ENCODE measurements at regions of chr16 and their contacts with region 1.

Region 1: DNA sequence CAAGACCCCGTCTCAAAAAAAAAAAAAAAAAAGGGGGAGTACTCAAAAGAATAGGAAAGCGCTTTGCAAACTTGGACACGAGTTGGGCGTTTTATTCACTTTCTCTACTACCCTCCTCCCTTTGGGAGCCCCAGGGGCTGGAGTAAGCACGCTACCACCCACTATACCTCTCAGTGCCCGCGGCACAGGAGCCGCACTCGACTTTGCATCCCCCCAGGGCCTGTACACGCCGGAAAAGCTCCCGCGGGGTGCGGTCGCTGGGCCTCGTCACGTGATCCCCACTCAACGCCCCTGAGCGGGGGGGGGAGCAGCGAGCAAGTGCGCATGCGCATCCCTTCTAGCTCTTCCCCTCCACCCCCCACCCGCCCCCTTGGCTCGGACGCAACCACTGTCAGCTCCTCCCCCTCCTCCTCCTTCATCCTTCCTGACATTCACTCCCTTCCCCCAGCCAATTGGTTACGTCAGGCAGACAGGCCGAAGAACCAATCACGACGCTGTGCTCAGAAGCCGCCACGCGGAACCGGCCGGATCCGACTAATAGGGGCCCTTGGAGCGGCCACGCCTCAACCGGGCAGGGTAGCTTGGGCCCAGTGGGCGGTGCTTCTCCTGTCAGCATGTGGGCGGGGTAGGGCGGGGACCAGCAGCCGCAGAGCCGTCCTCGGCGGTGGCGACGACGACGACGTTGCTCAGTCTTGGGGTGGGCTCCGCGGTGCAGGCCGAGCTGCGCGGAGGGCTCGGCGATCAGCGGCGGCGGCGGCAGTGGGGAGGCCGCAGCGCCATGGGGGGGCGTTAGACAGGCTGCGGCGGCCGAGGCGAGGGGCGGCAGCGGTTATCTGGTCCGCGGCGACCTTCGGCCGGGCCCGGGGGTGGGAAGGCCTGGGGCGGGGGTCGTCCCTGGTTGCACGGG is at the start of gene HAPSTR1:
- DNase-seq: peak; percentile 99
- ATAC-seq: peak; percentile 93
- H3K4me3 ChIP-seq: peak within 1 kb of the TSS; percentile 81
- H3K27ac ChIP-seq: peak within 1 kb of the TSS; percentile 90
- H3K4me1 ChIP-seq: peaks cover 6% of the 10 kb centered on the region
- H3K27me3 ChIP-seq: no peaks in the 10 kb centered on the region
- CTCF ChIP-seq: no peak
- EP300 ChIP-seq: no peak; a peak in 1 of 4 replicates
- POLR2A ChIP-seq: peak; percentile 98
- RAD21 ChIP-seq: no peak
- polyA plus RNA-seq, gene HAPSTR1: 8.7 to 12.5 TPM

Region 2: GRCh38 chr16:8694795-8695728 is 396.2 kb before region 1 on chr16:
- CTCF ChIA-PET with region 1: no interaction called
- POLR2A ChIA-PET with region 1: no interaction called
- RAD21 ChIA-PET with region 1: no interaction called
- SMC1A ChIA-PET with region 1: no interaction called
- in situ Hi-C with region 1: no loop called
- intact Hi-C with region 1: no loop called
- DNase-seq: no peak
- ATAC-seq: no peak
- H3K4me3 ChIP-seq: no peak overlapping the region
- H3K27ac ChIP-seq: no peak overlapping the region
- H3K4me1 ChIP-seq: no peaks in the 10 kb centered on the region
- H3K27me3 ChIP-seq: no peaks in the 10 kb centered on the region
- CTCF ChIP-seq: no peak
- EP300 ChIP-seq: no peak
- POLR2A ChIP-seq: no peak
- RAD21 ChIP-seq: no peak

Region 3: DNA sequence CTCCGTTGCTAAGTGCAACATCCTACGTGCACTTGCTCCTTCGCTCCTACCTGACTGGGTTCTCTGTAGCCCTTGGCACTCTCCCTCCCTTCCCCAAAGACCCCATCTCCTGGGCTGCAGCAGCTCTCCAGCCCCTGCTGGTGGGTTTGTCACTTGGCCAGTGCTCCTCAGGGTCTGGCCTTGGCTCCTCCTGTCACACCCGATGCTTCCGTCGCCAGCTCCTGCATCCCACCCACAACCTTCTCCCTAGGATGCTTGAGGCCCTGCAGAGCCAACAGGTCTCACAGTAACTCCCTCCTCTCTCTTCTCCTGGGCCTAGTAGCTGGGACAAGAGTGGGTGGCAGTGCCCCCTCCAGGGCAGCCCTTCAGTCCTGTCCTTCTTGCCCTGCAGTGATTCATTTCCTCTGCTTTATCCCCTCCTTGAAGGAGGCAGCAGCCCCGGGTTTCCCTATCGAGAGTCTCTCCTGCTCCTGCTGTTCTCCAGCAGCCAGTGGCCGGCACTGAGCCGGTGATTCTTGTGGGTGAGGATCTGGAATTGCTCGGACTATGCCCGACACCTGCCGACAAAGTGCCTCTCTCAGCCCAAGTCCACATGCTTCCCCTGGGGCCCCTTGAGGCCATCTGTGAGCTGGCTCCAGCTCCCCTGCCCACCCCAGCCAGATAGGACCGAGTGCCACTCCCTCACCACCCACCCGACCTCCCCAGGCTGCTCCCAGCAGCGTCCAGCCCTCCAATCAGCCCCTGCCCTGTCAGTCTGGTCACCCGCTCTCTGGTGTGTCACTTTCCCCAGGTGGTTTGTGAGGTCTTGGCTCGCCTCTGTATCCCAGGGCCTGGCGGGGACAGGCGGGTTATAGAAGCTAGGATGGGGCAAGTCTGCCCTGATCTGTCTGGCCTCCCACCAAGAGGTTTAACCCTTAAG is 205.3 kb before region 1 on chr16:
- CTCF ChIA-PET with region 1: no interaction called
- POLR2A ChIA-PET with region 1: no interaction called
- RAD21 ChIA-PET with region 1: interaction called, 12 read pairs
- SMC1A ChIA-PET with region 1: no interaction called
- in situ Hi-C with region 1: no loop called
- intact Hi-C with region 1: loop called (anchors 1 kb)
- DNase-seq: no peak
- ATAC-seq: peak; percentile 34
- H3K4me3 ChIP-seq: no peak overlapping the region
- H3K27ac ChIP-seq: no peak overlapping the region
- H3K4me1 ChIP-seq: peaks cover 14% of the 10 kb centered on the region
- H3K27me3 ChIP-seq: no peaks in the 10 kb centered on the region
- CTCF ChIP-seq: no peak
- EP300 ChIP-seq: no peak
- POLR2A ChIP-seq: peak; percentile 48
- RAD21 ChIP-seq: no peak

Region 4: GRCh38 chr16:9123871-9124270 is 32.7 kb after region 1 on chr16:
- CTCF ChIA-PET with region 1: no interaction called
- POLR2A ChIA-PET with region 1: interaction called, 10 read pairs
- RAD21 ChIA-PET with region 1: interaction called, 6 read pairs
- SMC1A ChIA-PET with region 1: interaction called, 44 read pairs
- in situ Hi-C with region 1: no loop called
- intact Hi-C with region 1: no loop called
- DNase-seq: no peak
- ATAC-seq: peak; percentile 54
- H3K4me3 ChIP-seq: no peak overlapping the region
- H3K27ac ChIP-seq: no peak overlapping the region
- H3K4me1 ChIP-seq: peaks cover 32% of the 10 kb centered on the region
- H3K27me3 ChIP-seq: no peaks in the 10 kb centered on the region
- CTCF ChIP-seq: no peak
- EP300 ChIP-seq: no peak
- POLR2A ChIP-seq: no peak
- RAD21 ChIP-seq: no peak

Region 5: DNA sequence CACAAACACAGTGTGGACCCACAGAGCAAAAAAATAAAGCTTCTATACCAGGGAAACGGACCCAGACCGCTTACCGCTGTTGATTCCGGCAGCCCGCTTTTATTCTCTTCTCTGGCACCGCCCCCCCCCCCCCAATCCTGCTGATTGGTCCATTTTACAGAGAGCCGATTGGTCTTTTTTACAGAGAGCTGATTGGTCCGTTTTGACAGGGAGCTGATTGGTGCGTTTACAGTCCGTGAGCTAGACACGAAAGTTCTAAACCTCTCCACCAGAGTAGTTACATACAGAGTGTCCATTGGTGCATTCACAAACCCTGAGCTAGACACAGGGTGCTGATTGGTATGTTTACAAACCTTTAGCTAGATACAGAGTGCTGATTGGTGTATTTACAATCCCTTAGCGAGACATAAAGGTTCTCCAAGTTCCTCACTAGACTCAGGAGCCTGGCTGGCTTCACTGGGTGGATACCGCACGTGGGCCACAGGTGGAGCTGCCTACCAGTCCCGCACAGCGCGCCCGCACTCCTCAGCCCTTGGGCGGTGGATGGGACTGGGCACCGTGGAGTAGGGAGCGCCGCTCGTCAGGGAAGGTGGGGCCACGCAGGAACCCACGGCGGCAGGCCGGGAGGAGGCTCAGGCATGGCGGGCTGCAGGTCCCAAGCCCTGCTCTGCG is 92.6 kb after region 1 on chr16:
- CTCF ChIA-PET with region 1: no interaction called
- POLR2A ChIA-PET with region 1: no interaction called
- RAD21 ChIA-PET with region 1: no interaction called
- SMC1A ChIA-PET with region 1: no interaction called
- in situ Hi-C with region 1: no loop called
- intact Hi-C with region 1: no loop called
- DNase-seq: no peak
- ATAC-seq: no peak
- H3K4me3 ChIP-seq: no peak overlapping the region
- H3K27ac ChIP-seq: no peak overlapping the region
- H3K4me1 ChIP-seq: no peaks in the 10 kb centered on the region
- H3K27me3 ChIP-seq: no peaks in the 10 kb centered on the region
- CTCF ChIP-seq: no peak
- EP300 ChIP-seq: no peak
- POLR2A ChIP-seq: no peak
- RAD21 ChIP-seq: no peak

Region 6: GRCh38 chr16:9199311-9199710 is 108.1 kb after region 1 on chr16:
- CTCF ChIA-PET with region 1: no interaction called
- POLR2A ChIA-PET with region 1: no interaction called
- RAD21 ChIA-PET with region 1: no interaction called
- SMC1A ChIA-PET with region 1: no interaction called
- in situ Hi-C with region 1: no loop called
- intact Hi-C with region 1: no loop called
- DNase-seq: no peak
- ATAC-seq: no peak
- H3K4me3 ChIP-seq: no peak overlapping the region
- H3K27ac ChIP-seq: no peak overlapping the region
- H3K4me1 ChIP-seq: no peaks in the 10 kb centered on the region
- H3K27me3 ChIP-seq: peaks cover 0 to 2% of the 10 kb centered on the region in 2 experiments; a peak in 2 of 4 replicates
- CTCF ChIP-seq: no peak
- EP300 ChIP-seq: no peak
- POLR2A ChIP-seq: no peak
- RAD21 ChIP-seq: no peak

Measured in GM12878 (cell line).